ENCODE measurements at regions of chr5 and their contacts with region 1.

Region 1: GRCh38 chr5:133539818-133540217 is 72.5 kb downstream of the FSTL4 start:
- DNase-seq: no peak
- H3K4me3 ChIP-seq: no peak overlapping the region
- H3K27ac ChIP-seq: no peak overlapping the region
- H3K4me1 ChIP-seq: no peaks in the 10 kb centered on the region
- H3K27me3 ChIP-seq: peaks cover 4% of the 10 kb centered on the region
- CTCF ChIP-seq: no peak
- EP300 ChIP-seq: no peak
- POLR2A ChIP-seq: no peak

Region 2: GRCh38 chr5:134934202-134934601 is 1394.4 kb after region 1 on chr5:
- in situ Hi-C with region 1: no loop called
- intact Hi-C with region 1: loop called (anchors 5 kb)
- DNase-seq: no peak
- H3K4me3 ChIP-seq: no peak overlapping the region
- H3K27ac ChIP-seq: no peak overlapping the region
- H3K4me1 ChIP-seq: no peaks in the 10 kb centered on the region
- H3K27me3 ChIP-seq: no peaks in the 10 kb centered on the region
- CTCF ChIP-seq: no peak
- EP300 ChIP-seq: no peak
- POLR2A ChIP-seq: no peak

Measured in transverse colon (tissue), 4 donors.